Activated T-helper 1 cell treated with anti-CD3 and anti-CD28 coated beads, Interleukin-12 subunit alpha, Interleukin-12 subunit beta, Interleukin-2, Interleukin-4 antibody, amounts not matched to agents 30 ng/mL and 10 ng/mL and 1 ng/mL, durations not matched to agents 14 hours and 24 hours and 36 hours (primary cell): ENCODE measurements at regions of chr5 and their contacts with region 1.

Region 1: GRCh38 chr5:43105369-43106289 is 15.1 kb upstream of the ZNF131 start:
- DNase-seq: peak; percentile 83
- H3K4me3 Mint-ChIP-seq: peak overlapping the region; percentile 86
- H3K27ac Mint-ChIP-seq: peak overlapping the region; percentile 89
- H3K4me1 Mint-ChIP-seq: peaks cover 41% of the 10 kb centered on the region
- H3K27me3 Mint-ChIP-seq: no peaks in the 10 kb centered on the region

Region 2: GRCh38 chr5:42908509-42909488 is 196.8 kb before region 1 on chr5:
- intact Hi-C with region 1: loop called (anchors 2 kb)
- DNase-seq: peak; percentile 84
- H3K4me3 Mint-ChIP-seq: peak overlapping the region; percentile 81
- H3K27ac Mint-ChIP-seq: peak overlapping the region; percentile 50
- H3K4me1 Mint-ChIP-seq: peaks cover 12% of the 10 kb centered on the region
- H3K27me3 Mint-ChIP-seq: peaks cover 26% of the 10 kb centered on the region

Region 3: DNA sequence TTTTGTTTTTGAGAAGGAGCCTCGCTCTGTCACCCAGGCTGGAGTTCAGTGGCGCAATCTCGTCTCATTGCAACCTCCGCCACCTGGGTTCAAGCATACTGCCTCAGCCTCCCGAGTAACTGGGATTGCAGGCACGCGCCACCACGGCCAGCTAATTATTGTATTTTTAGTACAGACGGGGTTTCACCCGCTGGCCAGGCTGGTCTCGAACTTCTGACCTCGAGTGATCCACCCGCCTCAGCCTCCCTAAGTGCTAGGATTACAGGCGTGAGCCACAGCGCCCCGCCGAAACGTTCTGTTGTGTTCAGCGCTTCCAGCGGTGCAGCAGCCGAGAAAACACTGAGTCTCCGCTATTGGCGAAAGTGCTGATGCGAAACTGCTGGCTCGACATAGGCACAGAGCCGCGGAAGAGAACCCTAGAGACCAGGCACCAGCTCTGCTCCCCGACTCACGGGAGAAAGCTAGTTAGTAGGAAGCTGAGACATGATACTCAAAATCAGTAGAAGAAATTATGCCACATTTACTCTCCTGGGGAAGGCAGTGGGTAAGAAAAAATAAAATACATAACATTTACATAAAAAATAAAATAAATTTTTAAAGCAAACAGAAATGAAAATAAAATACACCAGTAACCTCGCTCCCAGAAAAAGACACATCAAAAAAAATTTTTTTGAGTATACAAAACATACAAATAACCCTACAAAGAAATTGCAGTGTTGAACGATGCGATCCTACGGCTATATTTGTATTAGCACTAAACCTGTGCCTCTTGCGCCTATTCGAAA is 97.1 kb before region 1 on chr5:
- intact Hi-C with region 1: loop called (anchors 1 kb)
- DNase-seq: peak; percentile 86
- H3K4me3 Mint-ChIP-seq: peak overlapping the region; percentile 90
- H3K27ac Mint-ChIP-seq: peak overlapping the region; percentile 96
- H3K4me1 Mint-ChIP-seq: peaks cover 41% of the 10 kb centered on the region
- H3K27me3 Mint-ChIP-seq: no peaks in the 10 kb centered on the region

Region 4: GRCh38 chr5:43073597-43074546 is 31.8 kb before region 1 on chr5:
- intact Hi-C with region 1: loop called (anchors 2 kb)
- DNase-seq: peak; percentile 42
- H3K4me3 Mint-ChIP-seq: no peak overlapping the region
- H3K27ac Mint-ChIP-seq: peak overlapping the region; percentile 41
- H3K4me1 Mint-ChIP-seq: peaks cover 45% of the 10 kb centered on the region
- H3K27me3 Mint-ChIP-seq: no peaks in the 10 kb centered on the region

Region 5: GRCh38 chr5:43244823-43245565 is 139.4 kb after region 1 on chr5:
- intact Hi-C with region 1: no loop called
- DNase-seq: no peak
- H3K4me3 Mint-ChIP-seq: no peak overlapping the region
- H3K27ac Mint-ChIP-seq: no peak overlapping the region
- H3K4me1 Mint-ChIP-seq: no peaks in the 10 kb centered on the region
- H3K27me3 Mint-ChIP-seq: peaks cover 2% of the 10 kb centered on the region

Region 6: DNA sequence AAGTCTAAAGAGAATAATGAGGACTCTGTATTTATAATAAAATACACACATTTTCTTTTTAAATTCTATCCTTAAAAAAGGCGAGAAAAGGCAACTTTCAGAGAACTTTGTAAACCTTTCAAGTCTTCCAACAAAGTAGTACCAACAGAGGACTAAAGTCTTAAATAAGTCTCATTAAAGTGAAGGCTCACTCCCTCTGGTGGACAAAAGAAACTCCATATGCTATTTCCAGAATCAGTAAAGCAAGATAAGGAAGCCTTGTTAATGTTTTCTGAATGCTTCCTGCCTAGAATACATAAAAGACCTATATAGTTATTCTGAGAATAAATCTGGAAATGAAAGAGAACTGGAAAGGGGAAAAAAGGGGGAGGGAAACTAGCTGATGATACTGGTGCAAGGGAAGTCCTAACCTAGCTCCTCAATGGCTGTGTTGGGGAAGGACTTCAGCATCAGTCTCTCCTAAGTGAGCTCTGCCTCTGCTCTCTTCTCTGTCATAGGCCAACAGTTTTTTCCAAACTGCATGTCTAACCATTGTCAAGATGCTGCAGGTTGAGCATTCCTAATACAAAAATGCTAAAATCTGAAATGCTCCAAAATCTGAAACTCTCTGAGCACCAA is 200.4 kb after region 1 on chr5:
- intact Hi-C with region 1: loop called (anchors 1 kb)
- DNase-seq: no peak
- H3K4me3 Mint-ChIP-seq: peak overlapping the region; percentile 33
- H3K27ac Mint-ChIP-seq: peak overlapping the region; percentile 61
- H3K4me1 Mint-ChIP-seq: peaks cover 87% of the 10 kb centered on the region
- H3K27me3 Mint-ChIP-seq: no peaks in the 10 kb centered on the region

Region 7: DNA sequence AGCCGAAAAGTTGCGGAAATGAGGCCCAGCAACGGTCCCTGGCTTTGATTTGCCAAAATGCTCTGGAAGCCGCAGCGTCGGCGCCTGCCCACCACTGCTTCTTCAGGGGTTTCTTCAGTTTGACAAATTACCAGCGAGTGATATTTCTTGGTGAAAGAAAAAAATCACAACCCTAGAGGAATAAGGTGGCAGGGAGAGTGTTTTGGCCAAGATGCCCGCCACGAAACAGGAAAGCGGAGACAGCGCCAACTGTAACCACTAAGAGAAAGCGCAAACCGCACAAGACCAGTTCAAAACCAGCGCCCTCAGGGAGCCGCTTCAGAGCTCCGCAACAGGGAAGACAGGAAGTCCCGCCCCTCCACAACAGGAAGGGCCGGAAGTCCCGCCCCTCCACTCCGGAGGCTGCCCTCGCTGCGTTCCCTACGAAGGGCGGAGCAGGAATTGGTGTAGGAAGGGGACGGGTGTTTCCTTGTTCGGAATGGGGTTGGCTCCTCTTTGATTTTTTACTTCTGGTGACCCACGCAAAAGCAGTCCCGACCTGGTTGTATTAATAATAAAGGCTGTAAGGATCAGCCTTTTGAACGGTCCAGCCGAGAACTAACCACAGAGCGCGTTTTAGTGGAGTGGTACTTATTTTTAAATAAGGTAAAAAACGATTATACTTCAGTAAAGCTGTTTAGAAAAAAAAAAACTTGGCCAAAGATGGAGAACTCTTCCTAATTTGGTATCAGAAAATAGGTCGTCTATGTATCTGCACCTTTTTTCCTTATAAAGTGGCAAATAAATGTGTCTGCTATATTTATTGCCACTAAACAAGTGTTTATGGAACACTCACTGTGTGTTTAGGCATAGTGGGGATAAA is 409.4 kb after region 1 on chr5 and contains the start of gene C5orf34:
- intact Hi-C with region 1: loop called (anchors 1 kb)
- DNase-seq: peak; percentile 92
- H3K4me3 Mint-ChIP-seq: peak within 1 kb of the TSS; percentile 94
- H3K27ac Mint-ChIP-seq: peak within 1 kb of the TSS; percentile 97
- H3K4me1 Mint-ChIP-seq: peaks cover 32% of the 10 kb centered on the region
- H3K27me3 Mint-ChIP-seq: peaks cover 2% of the 10 kb centered on the region
- total RNA-seq, gene C5orf34: 5.3 and 5.5 TPM in 2 replicates